IMR-90 (cell line): ENCODE measurements at regions of chr13 and their contacts with region 1.

Region 1: DNA sequence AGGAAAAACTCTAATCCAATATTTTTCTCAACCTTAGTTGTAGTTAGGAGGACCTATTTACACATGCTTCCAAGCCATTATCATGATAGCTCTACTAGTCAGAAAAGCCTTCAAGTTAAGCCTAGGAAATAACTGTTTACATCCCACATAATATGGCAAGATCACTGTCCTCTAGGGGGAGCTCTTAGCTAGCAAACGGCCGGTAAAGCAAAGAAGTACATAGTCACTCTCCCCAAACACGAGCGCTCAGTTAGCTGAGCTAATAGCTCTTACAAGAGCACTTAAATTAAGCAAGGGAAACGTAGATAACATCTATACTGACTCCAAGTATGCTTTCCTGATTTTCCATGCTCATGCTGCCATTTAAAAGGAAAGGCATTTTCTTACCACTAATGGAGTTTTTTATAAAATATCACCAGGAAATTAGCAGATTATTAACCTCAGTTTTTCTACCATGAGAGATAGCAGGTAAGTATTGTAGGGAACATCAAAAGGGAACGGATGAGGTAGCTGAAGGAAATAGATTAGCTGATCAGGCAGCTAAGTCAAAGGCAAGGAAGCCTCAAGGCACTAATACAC is 100.6 kb upstream of the PABPC3 start:
- DNase-seq: peak; percentile 82
- ATAC-seq: peak; percentile 94
- H3K4me3 ChIP-seq: no peak overlapping the region
- H3K27ac ChIP-seq: no peak overlapping the region
- H3K4me1 ChIP-seq: no peaks in the 10 kb centered on the region
- H3K27me3 ChIP-seq: peaks cover 5% of the 10 kb centered on the region
- CTCF ChIP-seq: peak; percentile 87
- POLR2A ChIP-seq: no peak
- RAD21 ChIP-seq: peak; percentile 70

Region 2: GRCh38 chr13:24693862-24694471 is 301.3 kb before region 1 on chr13:
- CTCF ChIA-PET with region 1: interaction called, 3 read pairs
- POLR2A ChIA-PET with region 1: no interaction called
- dilution Hi-C with region 1: no loop called
- in situ Hi-C with region 1: no loop called
- intact Hi-C with region 1: loop called (anchors 1 kb)
- DNase-seq: peak; percentile 55
- ATAC-seq: peak; percentile 54; the same call in 1 of the 2 replicates
- H3K4me3 ChIP-seq: no peak overlapping the region
- H3K27ac ChIP-seq: no peak overlapping the region
- H3K4me1 ChIP-seq: no peaks in the 10 kb centered on the region
- H3K27me3 ChIP-seq: peaks cover 10% of the 10 kb centered on the region
- CTCF ChIP-seq: peak; percentile 49
- POLR2A ChIP-seq: no peak
- RAD21 ChIP-seq: peak; percentile 53

Region 3: GRCh38 chr13:24900507-24900906 is 94.8 kb before region 1 on chr13:
- CTCF ChIA-PET with region 1: no interaction called
- POLR2A ChIA-PET with region 1: no interaction called
- dilution Hi-C with region 1: no loop called
- in situ Hi-C with region 1: no loop called
- intact Hi-C with region 1: no loop called
- DNase-seq: no peak
- ATAC-seq: no peak
- H3K4me3 ChIP-seq: no peak overlapping the region
- H3K27ac ChIP-seq: no peak overlapping the region
- H3K4me1 ChIP-seq: no peaks in the 10 kb centered on the region; the same call in 1 of the 2 replicates
- H3K27me3 ChIP-seq: no peaks in the 10 kb centered on the region
- CTCF ChIP-seq: no peak
- POLR2A ChIP-seq: no peak
- RAD21 ChIP-seq: no peak

Region 4: GRCh38 chr13:25037057-25037813 is 41.9 kb after region 1 on chr13:
- CTCF ChIA-PET with region 1: interaction called, 5 read pairs
- POLR2A ChIA-PET with region 1: no interaction called
- dilution Hi-C with region 1: no loop called
- in situ Hi-C with region 1: no loop called
- intact Hi-C with region 1: loop called (anchors 2 kb)
- DNase-seq: peak; percentile 65
- ATAC-seq: peak; percentile 92
- H3K4me3 ChIP-seq: no peak overlapping the region
- H3K27ac ChIP-seq: no peak overlapping the region
- H3K4me1 ChIP-seq: no peaks in the 10 kb centered on the region
- H3K27me3 ChIP-seq: peaks cover 9% of the 10 kb centered on the region
- CTCF ChIP-seq: peak; percentile 69
- POLR2A ChIP-seq: no peak
- RAD21 ChIP-seq: peak; percentile 58

Region 5: DNA sequence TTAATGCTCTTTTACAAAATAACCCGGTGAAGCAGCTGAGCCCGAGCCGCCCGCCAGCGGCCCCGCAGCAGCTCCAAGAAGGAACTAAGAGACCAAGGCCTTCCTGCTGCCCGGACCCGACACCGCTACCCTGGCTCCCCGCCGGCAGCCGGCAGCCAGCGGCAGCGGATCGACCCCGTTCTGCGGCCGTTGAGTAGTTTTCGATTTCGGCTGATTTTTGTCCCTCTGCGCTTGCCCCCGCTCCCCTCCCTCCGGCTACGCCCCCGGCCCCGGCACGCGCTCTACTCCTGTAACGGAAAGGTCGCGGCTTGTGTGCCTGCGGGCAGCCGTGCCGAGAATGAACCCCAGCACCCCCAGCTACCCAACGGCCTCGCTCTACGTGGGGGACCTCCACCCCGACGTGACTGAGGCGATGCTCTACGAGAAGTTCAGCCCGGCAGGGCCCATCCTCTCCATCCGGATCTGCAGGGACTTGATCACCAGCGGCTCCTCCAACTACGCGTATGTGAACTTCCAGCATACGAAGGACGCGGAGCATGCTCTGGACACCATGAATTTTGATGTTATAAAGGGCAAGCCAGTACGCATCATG is 100.6 kb after region 1 on chr13 and contains the start of gene PABPC3:
- CTCF ChIA-PET with region 1: no interaction called
- POLR2A ChIA-PET with region 1: no interaction called
- dilution Hi-C with region 1: no loop called
- in situ Hi-C with region 1: no loop called
- intact Hi-C with region 1: no loop called
- DNase-seq: no peak
- ATAC-seq: no peak
- H3K4me3 ChIP-seq: peak within 1 kb of the TSS; percentile 37
- H3K27ac ChIP-seq: no peak within 1 kb of the TSS
- H3K4me1 ChIP-seq: no peaks in the 10 kb centered on the region
- H3K27me3 ChIP-seq: peaks cover 1% of the 10 kb centered on the region; the same call in 1 of the 2 replicates
- CTCF ChIP-seq: no peak
- POLR2A ChIP-seq: no peak
- RAD21 ChIP-seq: no peak
- total RNA-seq, gene PABPC3: under 0.01 and 0.18 TPM in 2 replicates

Region 6: GRCh38 chr13:25440061-25440460 is 444.7 kb after region 1 on chr13:
- CTCF ChIA-PET with region 1: no interaction called
- POLR2A ChIA-PET with region 1: no interaction called
- dilution Hi-C with region 1: no loop called
- in situ Hi-C with region 1: no loop called
- intact Hi-C with region 1: no loop called
- DNase-seq: no peak
- ATAC-seq: no peak
- H3K4me3 ChIP-seq: no peak overlapping the region
- H3K27ac ChIP-seq: no peak overlapping the region
- H3K4me1 ChIP-seq: no peaks in the 10 kb centered on the region
- H3K27me3 ChIP-seq: no peaks in the 10 kb centered on the region
- CTCF ChIP-seq: no peak
- POLR2A ChIP-seq: no peak
- RAD21 ChIP-seq: no peak